HCT116 (cell line): ENCODE measurements at regions of chr7 and their contacts with region 1.

Region 1: GRCh38 chr7:135801045-135801693 is 52.6 kb upstream of the FAM180A start:
- DNase-seq: peak; percentile 58
- ATAC-seq: peak; percentile 85
- H3K4me3 ChIP-seq: no peak overlapping the region
- H3K27ac ChIP-seq: no peak overlapping the region
- H3K4me1 ChIP-seq: peaks cover 0 to 11% of the 10 kb centered on the region in 2 experiments; a peak in 1 of 4 replicates
- H3K27me3 ChIP-seq: no peaks in the 10 kb centered on the region
- CTCF ChIP-seq: peak; percentile 65 to 92 (median 84)
- POLR2A ChIP-seq: no peak
- RAD21 ChIP-seq: peak; percentile 98

Region 2: DNA sequence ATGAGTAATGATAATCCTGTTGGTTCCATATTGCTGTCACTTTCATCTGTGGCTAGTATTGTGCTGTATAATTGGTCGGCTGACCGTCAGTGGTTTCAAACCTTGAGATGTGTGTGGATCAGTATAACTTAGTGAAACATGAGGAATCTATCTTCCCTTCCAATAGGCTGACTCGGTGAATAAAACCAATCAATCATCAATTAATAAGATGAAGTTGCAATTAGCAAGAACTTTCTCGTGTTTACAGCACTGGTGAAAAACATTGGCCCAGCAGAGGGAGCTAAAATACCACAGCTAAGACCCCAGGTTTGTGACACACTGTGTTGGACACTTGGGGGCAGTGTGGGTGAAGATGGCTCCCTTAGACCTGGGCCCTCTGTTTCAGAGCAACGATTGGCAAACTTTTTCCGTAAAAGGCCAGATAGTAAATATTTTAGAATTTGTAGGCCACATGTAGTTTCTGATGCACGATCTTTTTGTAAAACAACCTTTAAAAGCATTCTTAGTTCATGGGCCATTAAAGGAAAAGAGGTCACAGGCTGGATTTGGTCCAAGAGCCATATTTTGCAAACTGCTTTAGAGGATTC is 519.7 kb before region 1 on chr7:
- CTCF ChIA-PET with region 1: no interaction called
- POLR2A ChIA-PET with region 1: no interaction called
- RAD21 ChIA-PET with region 1: no interaction called
- intact Hi-C with region 1: loop called (anchors 10 kb)
- DNase-seq: peak; percentile 79
- ATAC-seq: peak; percentile 99
- H3K4me3 ChIP-seq: no peak overlapping the region
- H3K27ac ChIP-seq: no peak overlapping the region
- H3K4me1 ChIP-seq: no peaks in the 10 kb centered on the region; a peak in 1 of 4 replicates
- H3K27me3 ChIP-seq: peaks cover 5% of the 10 kb centered on the region
- CTCF ChIP-seq: peak; percentile 96 to 100 (median 99)
- POLR2A ChIP-seq: no peak
- RAD21 ChIP-seq: peak; percentile 100

Region 3: GRCh38 chr7:135672560-135673359 is 128.4 kb before region 1 on chr7:
- CTCF ChIA-PET with region 1: interaction called, 9 read pairs
- POLR2A ChIA-PET with region 1: no interaction called
- RAD21 ChIA-PET with region 1: no interaction called
- intact Hi-C with region 1: loop called (anchors 1 kb)
- DNase-seq: peak; percentile 37
- ATAC-seq: peak; percentile 88
- H3K4me3 ChIP-seq: no peak overlapping the region
- H3K27ac ChIP-seq: no peak overlapping the region
- H3K4me1 ChIP-seq: no peaks in the 10 kb centered on the region
- H3K27me3 ChIP-seq: no peaks in the 10 kb centered on the region
- CTCF ChIP-seq: peak; percentile 66 to 85 (median 78); a peak in 5 of 6 replicates
- POLR2A ChIP-seq: no peak
- RAD21 ChIP-seq: peak; percentile 83

Region 4: DNA sequence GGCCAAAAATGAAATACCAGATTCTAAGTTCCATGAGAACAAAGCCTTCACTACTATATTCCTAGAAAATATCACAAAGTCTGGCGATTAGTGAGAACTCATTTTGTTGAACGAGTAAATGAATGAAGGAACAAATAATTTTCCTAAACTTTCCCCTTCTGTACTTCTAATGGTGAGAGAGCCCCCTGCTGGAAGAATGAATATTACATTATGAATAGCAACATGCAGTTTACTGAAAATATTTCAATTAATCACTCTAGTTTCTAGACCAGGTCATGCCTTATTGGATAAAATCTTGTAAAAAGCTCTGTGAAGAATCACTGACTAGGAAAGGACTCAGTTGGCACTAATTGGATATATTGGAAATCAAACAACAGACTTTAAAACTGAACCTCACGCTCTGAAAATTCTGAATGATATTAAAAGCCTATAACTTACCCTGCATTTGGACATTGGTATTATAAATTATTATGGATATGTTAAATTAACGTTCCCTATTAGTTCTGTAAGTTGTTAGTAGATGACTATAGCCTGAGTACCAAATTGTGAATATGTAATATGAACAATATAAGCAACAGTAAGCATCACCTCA is 208.4 kb after region 1 on chr7:
- CTCF ChIA-PET with region 1: no interaction called
- POLR2A ChIA-PET with region 1: no interaction called
- RAD21 ChIA-PET with region 1: no interaction called
- intact Hi-C with region 1: loop called (anchors 1 kb)
- DNase-seq: peak; percentile 22
- ATAC-seq: 0 out of 2 replicates have a peak, but pooled peaks have one; percentile 55
- H3K4me3 ChIP-seq: no peak overlapping the region
- H3K27ac ChIP-seq: no peak overlapping the region
- H3K4me1 ChIP-seq: no peaks in the 10 kb centered on the region
- H3K27me3 ChIP-seq: peaks cover 16% of the 10 kb centered on the region
- CTCF ChIP-seq: peak; percentile 56 to 83 (median 75)
- POLR2A ChIP-seq: no peak
- RAD21 ChIP-seq: peak; percentile 88

Region 5: DNA sequence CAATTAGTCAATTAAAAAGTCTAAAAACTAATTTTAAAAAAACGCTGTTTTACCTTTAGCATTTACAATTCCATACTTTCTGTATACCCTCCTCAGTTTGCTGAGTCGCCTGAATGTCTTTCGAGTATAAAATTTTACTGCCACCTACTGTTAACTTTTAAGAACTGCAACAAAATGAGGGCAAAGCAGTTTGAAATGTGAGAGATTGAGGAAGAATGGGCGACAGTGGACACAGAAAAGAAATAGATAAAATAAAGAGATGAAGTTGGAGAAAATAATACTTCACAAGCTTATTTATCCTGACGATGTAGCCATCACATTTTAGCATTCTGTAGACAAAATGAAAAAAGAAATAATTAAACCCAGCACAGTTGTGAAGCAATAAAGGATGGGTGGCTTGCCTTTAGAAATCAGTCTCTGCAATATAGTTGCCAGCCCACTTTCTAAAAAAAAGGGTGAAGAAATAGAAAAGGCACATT is 1653.1 kb after region 1 on chr7:
- CTCF ChIA-PET with region 1: no interaction called
- POLR2A ChIA-PET with region 1: no interaction called
- RAD21 ChIA-PET with region 1: no interaction called
- intact Hi-C with region 1: loop called (anchors 5 kb)
- DNase-seq: no peak
- ATAC-seq: 0 out of 2 replicates have a peak, but pooled peaks have one; percentile 46
- H3K4me3 ChIP-seq: no peak overlapping the region
- H3K27ac ChIP-seq: no peak overlapping the region
- H3K4me1 ChIP-seq: no peaks in the 10 kb centered on the region
- H3K27me3 ChIP-seq: no peaks in the 10 kb centered on the region
- CTCF ChIP-seq: peak; percentile 23 to 70 (median 53); a peak in 5 of 6 replicates
- POLR2A ChIP-seq: no peak
- RAD21 ChIP-seq: peak; percentile 58

Region 6: DNA sequence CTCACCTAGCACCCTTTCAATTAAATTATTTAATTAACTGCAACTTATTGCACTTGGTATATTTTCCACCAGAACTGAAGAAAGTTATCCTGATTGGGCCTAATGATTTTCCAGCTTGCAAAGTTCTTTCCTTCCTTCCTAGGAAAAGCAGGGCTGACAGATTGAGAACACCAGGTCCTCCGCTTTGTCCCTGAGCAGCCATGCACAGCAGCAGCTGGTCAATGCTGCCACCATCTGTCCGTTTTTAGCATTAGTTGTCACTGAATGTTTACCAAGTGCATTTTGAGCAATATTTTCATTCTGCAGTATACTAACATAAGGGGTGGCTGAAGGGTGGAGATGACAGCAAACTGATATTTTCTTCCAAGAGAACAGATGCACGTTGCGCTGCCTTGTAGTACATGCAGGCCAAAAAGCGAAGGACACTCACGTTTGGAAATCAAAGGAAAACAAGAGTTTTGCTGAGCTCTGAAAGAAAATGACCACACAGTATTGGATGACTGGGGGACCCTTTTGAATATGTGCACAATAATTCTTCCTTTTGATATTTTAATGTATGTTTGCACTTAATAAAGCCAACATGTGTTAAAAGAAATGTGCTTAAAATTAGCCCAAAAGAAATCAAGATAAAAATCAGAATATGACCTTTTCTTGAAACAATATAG is 1791.2 kb after region 1 on chr7:
- CTCF ChIA-PET with region 1: no interaction called
- POLR2A ChIA-PET with region 1: no interaction called
- RAD21 ChIA-PET with region 1: no interaction called
- intact Hi-C with region 1: loop called (anchors 1 kb)
- DNase-seq: peak; percentile 22
- ATAC-seq: peak; percentile 92
- H3K4me3 ChIP-seq: no peak overlapping the region
- H3K27ac ChIP-seq: no peak overlapping the region
- H3K4me1 ChIP-seq: peaks cover 0 to 6% of the 10 kb centered on the region in 2 experiments; a peak in 1 of 4 replicates
- H3K27me3 ChIP-seq: 0 out of 2 replicates have a peak, but pooled peaks cover 6% of the 10 kb centered on the region
- CTCF ChIP-seq: peak; percentile 62 to 80 (median 65); a peak in 5 of 6 replicates
- POLR2A ChIP-seq: no peak
- RAD21 ChIP-seq: peak; percentile 86